Left cardiac atrium (tissue), 4 donors: ENCODE measurements at regions of chr1 and their contacts with region 1.

Region 1: GRCh38 chr1:31564134-31564989 is 12.0 kb upstream of the TINAGL1 start:
- DNase-seq: no peak
- ATAC-seq: peak; percentile 66 to 70

Region 2: GRCh38 chr1:31593770-31594632 is 29.6 kb after region 1 on chr1:
- intact Hi-C with region 1: loop called (anchors 1 to 5 kb)
- DNase-seq: peak; percentile 87
- ATAC-seq: peak; percentile 84 to 87

Region 3: GRCh38 chr1:31617917-31618660 is 53.7 kb after region 1 on chr1:
- intact Hi-C with region 1: loop called in 1 of 2 experiments (anchors 2 kb)
- DNase-seq: peak; percentile 53
- ATAC-seq: peak; percentile 56 to 67